ENCODE measurements at regions of chr3 and their contacts with region 1.

Region 1: GRCh38 chr3:183468424-183468823 is 40.0 kb upstream of the MCF2L2 start:
- DNase-seq: no peak
- ATAC-seq: no peak
- H3K4me3 ChIP-seq: no peak overlapping the region
- H3K4me3 Mint-ChIP-seq: no peak overlapping the region
- H3K27ac ChIP-seq: no peak overlapping the region
- H3K27ac Mint-ChIP-seq: no peak overlapping the region
- H3K4me1 ChIP-seq: peaks cover 3% of the 10 kb centered on the region
- H3K4me1 Mint-ChIP-seq: peaks cover 5 to 6% of the 10 kb centered on the region in 2 donors
- H3K27me3 ChIP-seq: no peaks in the 10 kb centered on the region
- H3K27me3 Mint-ChIP-seq: peaks cover 6% of the 10 kb centered on the region in 2 donors
- CTCF ChIP-seq: no peak

Region 2: GRCh38 chr3:183555541-183556081 is 87.2 kb after region 1 on chr3 and contains the start of gene KLHL6:
- intact Hi-C with region 1: loop called (anchors 1 kb)
- DNase-seq: peak; percentile 69 to 86
- ATAC-seq: peak; percentile 89 to 96 (median 96)
- H3K4me3 ChIP-seq: peak within 1 kb of the TSS; percentile 57
- H3K4me3 Mint-ChIP-seq: peak within 1 kb of the TSS; percentile 98
- H3K27ac ChIP-seq: peak within 1 kb of the TSS; percentile 80
- H3K27ac Mint-ChIP-seq: peak within 1 kb of the TSS; percentile 97 to 99
- H3K4me1 ChIP-seq: peaks cover 36% of the 10 kb centered on the region
- H3K4me1 Mint-ChIP-seq: peaks cover 47 to 52% of the 10 kb centered on the region in 2 donors
- H3K27me3 ChIP-seq: no peaks in the 10 kb centered on the region
- H3K27me3 Mint-ChIP-seq: no peaks in the 10 kb centered on the region
- CTCF ChIP-seq: no peak
- total RNA-seq, gene KLHL6: 10.9 to 17.3 (median 13.6) TPM

Region 3: DNA sequence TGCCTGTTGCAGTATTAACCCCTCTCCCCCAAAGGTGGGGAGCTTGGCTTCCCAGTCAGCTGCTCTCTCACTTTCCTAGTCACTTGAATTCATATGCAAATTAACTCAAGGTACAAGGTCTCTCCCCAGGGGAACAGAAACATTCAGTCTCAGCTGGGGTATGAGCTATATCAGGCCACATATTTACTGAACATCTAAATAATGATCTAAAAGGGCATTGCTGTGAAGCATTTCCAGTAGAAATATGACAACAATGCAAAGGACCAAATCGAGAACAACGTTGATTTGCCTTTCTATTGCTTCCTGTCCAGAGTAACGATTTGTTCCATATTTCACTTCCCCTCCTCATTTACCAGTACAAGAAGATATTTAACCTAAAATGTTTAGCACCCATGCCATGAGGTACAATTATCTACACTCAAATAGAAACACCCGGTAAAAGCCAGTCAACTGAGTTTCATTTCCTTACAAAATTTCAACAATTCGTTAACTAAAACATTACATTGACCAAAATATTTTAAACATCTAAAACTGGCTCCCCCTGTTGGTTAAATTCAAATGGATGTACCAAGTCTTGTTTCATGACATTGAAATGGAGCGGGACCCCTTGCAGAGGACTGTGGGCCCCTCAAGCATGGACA is 123.6 kb after region 1 on chr3:
- intact Hi-C with region 1: loop called (anchors 1 kb)
- DNase-seq: peak in 1 of 2 donors; percentile 60
- ATAC-seq: peak in 1 of 3 donors; percentile 38
- H3K4me3 ChIP-seq: no peak overlapping the region
- H3K4me3 Mint-ChIP-seq: peak overlapping the region; percentile 54
- H3K27ac ChIP-seq: no peak overlapping the region
- H3K27ac Mint-ChIP-seq: peak overlapping the region in 1 of 2 donors; percentile 40
- H3K4me1 ChIP-seq: peaks cover 16% of the 10 kb centered on the region
- H3K4me1 Mint-ChIP-seq: peaks cover 13 to 16% of the 10 kb centered on the region in 2 donors
- H3K27me3 ChIP-seq: no peaks in the 10 kb centered on the region
- H3K27me3 Mint-ChIP-seq: peaks cover 0 to 12% of the 10 kb centered on the region in 2 donors
- CTCF ChIP-seq: peak; percentile 50

Region 4: GRCh38 chr3:183766745-183767606 is 298.6 kb after region 1 on chr3:
- intact Hi-C with region 1: loop called (anchors 1 kb)
- DNase-seq: peak; percentile 49 to 86
- ATAC-seq: peak; percentile 89 to 95 (median 91)
- H3K4me3 ChIP-seq: no peak overlapping the region
- H3K4me3 Mint-ChIP-seq: no peak overlapping the region
- H3K27ac ChIP-seq: no peak overlapping the region
- H3K27ac Mint-ChIP-seq: peak overlapping the region; percentile 13 to 27
- H3K4me1 ChIP-seq: no peaks in the 10 kb centered on the region
- H3K4me1 Mint-ChIP-seq: peaks cover 6% of the 10 kb centered on the region in 2 donors
- H3K27me3 ChIP-seq: no peaks in the 10 kb centered on the region
- H3K27me3 Mint-ChIP-seq: no peaks in the 10 kb centered on the region
- CTCF ChIP-seq: peak; percentile 78

Region 5: DNA sequence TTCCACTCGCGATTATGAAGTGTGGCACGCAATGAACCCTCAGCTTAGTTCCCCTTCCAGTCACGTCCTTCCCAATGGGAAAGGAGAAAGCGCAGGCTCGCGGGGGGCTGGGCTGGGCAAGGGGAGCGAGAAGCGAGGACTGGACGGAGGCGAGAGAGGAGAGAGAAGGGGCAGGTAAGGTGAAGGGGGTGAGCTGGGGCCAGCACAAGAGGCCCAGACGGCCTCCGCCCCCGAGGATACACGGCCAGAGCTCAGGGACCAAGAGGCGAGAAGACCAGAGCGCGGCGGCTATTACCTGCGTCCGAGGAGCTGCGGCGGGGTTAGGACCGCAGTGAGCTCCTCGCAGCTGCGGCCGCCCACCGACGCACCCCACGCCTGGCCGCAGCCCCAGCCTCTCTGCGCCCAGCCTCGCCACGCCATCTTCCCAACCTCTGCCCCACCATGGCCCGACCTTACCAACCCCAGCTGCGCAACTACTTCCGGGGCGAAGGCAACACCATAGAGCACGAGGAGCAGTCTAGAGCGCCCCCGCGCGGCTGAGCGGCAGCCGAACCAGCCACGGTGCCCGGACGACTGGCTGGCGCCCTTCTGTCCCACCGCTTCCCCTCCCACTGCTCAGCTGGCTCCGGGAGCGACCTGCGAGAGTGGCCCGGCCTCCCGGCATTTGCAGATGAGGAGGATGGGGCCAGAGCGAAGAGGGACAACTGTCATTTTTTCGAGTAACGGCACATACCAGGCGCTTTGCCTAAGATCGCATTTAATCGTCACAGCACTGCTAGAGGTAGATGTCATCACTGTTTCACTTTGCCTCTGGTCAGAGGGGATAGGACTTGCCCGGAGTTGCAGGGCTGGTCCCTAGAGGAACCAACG is 416.2 kb after region 1 on chr3 and contains the start of gene PARL:
- intact Hi-C with region 1: loop called (anchors 1 kb)
- DNase-seq: peak; percentile 94 to 97
- ATAC-seq: peak; percentile 99 to 100 (median 100)
- H3K4me3 ChIP-seq: peak within 1 kb of the TSS; percentile 88
- H3K4me3 Mint-ChIP-seq: peak within 1 kb of the TSS; percentile 95
- H3K27ac ChIP-seq: peak within 1 kb of the TSS; percentile 65
- H3K27ac Mint-ChIP-seq: peak within 1 kb of the TSS; percentile 87 to 96
- H3K4me1 ChIP-seq: peaks cover 20% of the 10 kb centered on the region
- H3K4me1 Mint-ChIP-seq: peaks cover 31 to 33% of the 10 kb centered on the region in 2 donors
- H3K27me3 ChIP-seq: no peaks in the 10 kb centered on the region
- H3K27me3 Mint-ChIP-seq: peaks cover 5 to 8% of the 10 kb centered on the region in 2 donors
- CTCF ChIP-seq: peak; percentile 90
- total RNA-seq, gene PARL: 35.1 to 47.1 (median 37.7) TPM

Measured in natural killer cell (primary cell).